ENCODE measurements at regions of chr14 and their contacts with region 1.

Region 1: DNA sequence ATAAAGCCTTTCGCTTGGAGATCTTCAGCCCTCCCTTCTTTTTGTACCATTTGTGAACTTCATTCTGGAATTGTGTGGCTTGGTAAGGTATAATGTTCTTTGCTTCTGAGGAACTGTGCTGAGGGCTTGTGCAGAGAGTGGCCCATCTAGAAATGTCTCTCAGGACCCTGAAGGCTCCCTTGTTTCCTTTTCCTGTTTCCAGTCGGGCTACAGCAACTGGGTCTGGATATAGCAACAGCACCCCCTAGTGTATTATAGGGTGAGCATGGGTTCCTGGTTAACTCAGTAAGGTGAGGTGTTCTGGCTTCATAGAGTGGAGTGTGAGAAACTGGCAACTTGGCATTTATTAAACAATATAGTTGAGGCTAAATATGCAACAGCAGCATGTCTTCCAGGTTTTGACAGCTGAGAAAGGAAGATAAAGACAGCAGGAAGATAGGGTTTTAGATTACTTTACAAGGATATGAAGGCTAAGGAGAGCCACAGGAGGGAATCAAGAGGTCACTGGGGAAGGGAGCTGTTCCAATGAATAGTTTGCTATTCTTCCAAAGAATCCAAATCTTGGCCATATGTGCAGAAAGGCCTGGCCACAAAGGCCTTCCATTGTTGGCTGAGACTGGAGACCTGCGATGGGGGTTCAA is 49.1 kb upstream of the RNU6-8 start:
- DNase-seq: no peak
- ATAC-seq: peak; percentile 85
- H3K4me3 ChIP-seq: no peak overlapping the region
- H3K27ac ChIP-seq: no peak overlapping the region
- H3K4me1 ChIP-seq: no peaks in the 10 kb centered on the region
- H3K27me3 ChIP-seq: no peaks in the 10 kb centered on the region

Region 2: GRCh38 chr14:31510222-31510621 is 741.9 kb before region 1 on chr14:
- intact Hi-C with region 1: loop called (anchors 5 kb)
- DNase-seq: no peak
- ATAC-seq: no peak
- H3K4me3 ChIP-seq: no peak overlapping the region
- H3K27ac ChIP-seq: no peak overlapping the region
- H3K4me1 ChIP-seq: peaks cover 0 to 3% of the 10 kb centered on the region in 2 donors
- H3K27me3 ChIP-seq: no peaks in the 10 kb centered on the region

Region 3: GRCh38 chr14:32076278-32077080 is 175.7 kb before region 1 on chr14:
- intact Hi-C with region 1: loop called (anchors 2 kb)
- DNase-seq: peak; percentile 98 to 99
- ATAC-seq: peak; percentile 97
- H3K4me3 ChIP-seq: peak overlapping the region; percentile 93 to 98
- H3K27ac ChIP-seq: peak overlapping the region; percentile 80 to 94
- H3K4me1 ChIP-seq: peaks cover 0 to 2% of the 10 kb centered on the region in 2 donors
- H3K27me3 ChIP-seq: no peaks in the 10 kb centered on the region

Region 4: DNA sequence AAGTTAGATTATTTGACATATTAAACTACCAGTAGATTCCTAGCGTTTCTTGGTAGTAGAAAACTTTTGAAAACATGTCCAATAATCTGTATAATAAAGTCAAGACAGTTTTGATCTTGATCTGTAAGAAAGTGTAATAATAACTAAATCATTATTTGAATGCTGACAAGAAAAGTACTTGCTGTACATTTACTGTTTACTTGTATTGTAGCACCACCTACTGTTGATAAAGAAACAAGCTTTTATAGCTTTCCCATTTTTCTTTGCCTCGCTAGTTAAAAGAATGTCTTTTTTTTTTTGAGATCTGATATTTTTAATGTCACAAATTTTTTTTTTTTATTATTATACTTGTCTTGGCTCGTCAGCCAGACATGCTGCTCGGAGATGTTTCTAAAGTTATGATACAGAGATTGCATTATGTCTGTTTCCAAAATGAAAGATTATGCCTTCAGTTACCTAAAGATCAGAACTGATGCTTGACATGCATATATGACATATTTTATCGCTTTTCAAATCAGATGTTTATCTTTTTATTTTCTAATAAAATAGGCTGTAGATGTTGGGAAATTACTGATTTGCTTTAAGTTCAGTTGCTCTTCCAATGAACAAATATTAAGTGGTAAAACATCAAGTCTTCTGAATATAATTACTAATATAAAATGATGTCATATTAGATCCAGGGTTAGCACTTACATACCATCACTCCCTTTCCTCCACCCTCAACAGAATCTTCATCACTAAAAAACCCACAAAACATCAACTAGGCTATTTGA is 217.4 kb after region 1 on chr14:
- intact Hi-C with region 1: loop called (anchors 5 kb)
- DNase-seq: no peak
- ATAC-seq: no peak
- H3K4me3 ChIP-seq: no peak overlapping the region
- H3K27ac ChIP-seq: peak overlapping the region in 1 of 2 donors; percentile 51
- H3K4me1 ChIP-seq: peaks cover 6 to 21% of the 10 kb centered on the region in 2 donors
- H3K27me3 ChIP-seq: no peaks in the 10 kb centered on the region

Region 5: GRCh38 chr14:32560209-32560857 is 308.2 kb after region 1 on chr14:
- intact Hi-C with region 1: loop called (anchors 5 to 10 kb)
- DNase-seq: peak in 1 of 2 donors; percentile 46
- ATAC-seq: peak; percentile 80
- H3K4me3 ChIP-seq: no peak overlapping the region
- H3K27ac ChIP-seq: no peak overlapping the region
- H3K4me1 ChIP-seq: peaks cover 3 to 6% of the 10 kb centered on the region in 2 donors
- H3K27me3 ChIP-seq: no peaks in the 10 kb centered on the region